CD4-positive, alpha-beta memory T cell (primary cell): ENCODE measurements at regions of chr16 and their contacts with region 1.

Region 1: GRCh38 chr16:85759631-85760419 is 8.9 kb upstream of the C16orf74 start:
- DNase-seq: peak in 1 of 5 donors; percentile 13
- H3K4me3 ChIP-seq: no peak overlapping the region
- H3K4me3 Mint-ChIP-seq: no peak overlapping the region
- H3K27ac ChIP-seq: no peak overlapping the region
- H3K27ac Mint-ChIP-seq: no peak overlapping the region
- H3K4me1 ChIP-seq: peaks cover 8% of the 10 kb centered on the region
- H3K4me1 Mint-ChIP-seq: peaks cover 0 to 4% (median 1%) of the 10 kb centered on the region in 4 donors
- H3K27me3 ChIP-seq: no peaks in the 10 kb centered on the region
- H3K27me3 Mint-ChIP-seq: peaks cover 15 to 21% of the 10 kb centered on the region in 2 donors

Region 2: GRCh38 chr16:85601730-85602401 is 158.0 kb before region 1 on chr16:
- CTCF ChIA-PET with region 1: no interaction called
- POLR2A ChIA-PET with region 1: no interaction called
- intact Hi-C with region 1: no loop called
- DNase-seq: no peak
- H3K4me3 ChIP-seq: no peak overlapping the region
- H3K4me3 Mint-ChIP-seq: no peak overlapping the region
- H3K27ac ChIP-seq: no peak overlapping the region
- H3K27ac Mint-ChIP-seq: no peak overlapping the region
- H3K4me1 ChIP-seq: peaks cover 5% of the 10 kb centered on the region
- H3K4me1 Mint-ChIP-seq: peaks cover 2 to 18% (median 9%) of the 10 kb centered on the region in 4 donors
- H3K27me3 ChIP-seq: no peaks in the 10 kb centered on the region
- H3K27me3 Mint-ChIP-seq: no peaks in the 10 kb centered on the region

Region 3: GRCh38 chr16:85659805-85660495 is 99.9 kb before region 1 on chr16:
- CTCF ChIA-PET with region 1: interaction called, 29 read pairs
- POLR2A ChIA-PET with region 1: no interaction called
- intact Hi-C with region 1: no loop called
- DNase-seq: peak; percentile 35 to 61 (median 44)
- H3K4me3 ChIP-seq: no peak overlapping the region
- H3K4me3 Mint-ChIP-seq: no peak overlapping the region
- H3K27ac ChIP-seq: no peak overlapping the region
- H3K27ac Mint-ChIP-seq: peak overlapping the region in 4 of 7 donors; percentile 19 to 89 (median 52)
- H3K4me1 ChIP-seq: no peaks in the 10 kb centered on the region
- H3K4me1 Mint-ChIP-seq: no peaks in the 10 kb centered on the region
- H3K27me3 ChIP-seq: no peaks in the 10 kb centered on the region
- H3K27me3 Mint-ChIP-seq: no peaks in the 10 kb centered on the region